Kidney (tissue), 22 donors: ENCODE measurements at regions of chr17 and their contacts with region 1.

Region 1: DNA sequence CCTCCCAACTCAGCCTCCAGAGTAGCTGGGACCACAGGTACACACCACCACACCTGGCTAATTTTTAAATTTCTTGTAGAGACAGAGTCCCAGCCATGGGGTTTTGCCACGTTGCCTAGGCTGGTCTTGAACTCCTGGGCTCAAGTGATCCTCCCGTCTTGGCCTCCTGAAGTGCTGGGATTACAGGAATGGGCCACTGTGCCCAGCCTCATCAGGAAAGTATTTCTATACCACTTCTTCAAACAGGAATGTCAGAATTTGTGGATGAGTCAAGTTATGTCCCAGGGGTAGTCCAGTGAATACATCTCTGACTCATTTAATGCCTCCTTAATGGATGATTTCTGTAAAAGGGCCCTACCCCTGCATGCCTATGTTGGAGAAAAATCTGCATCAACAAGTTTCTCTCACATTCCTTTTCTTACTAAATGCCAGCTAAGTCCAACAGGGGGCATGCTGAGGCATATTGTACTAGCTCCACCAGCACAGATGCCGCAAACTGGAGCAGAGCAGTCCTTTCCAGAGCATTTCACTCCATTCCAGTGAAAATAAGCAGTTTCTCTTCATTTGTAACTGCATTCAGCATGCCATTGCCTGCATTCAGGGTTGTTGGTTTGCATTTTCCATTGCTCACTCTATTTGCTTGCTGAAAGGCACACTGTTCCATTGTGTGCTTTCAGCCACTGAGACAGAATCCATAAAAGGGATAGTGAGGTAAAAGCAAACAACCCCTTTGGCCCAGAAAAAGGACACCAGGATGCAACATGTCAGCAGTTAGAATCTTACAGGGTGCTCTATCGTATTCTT is 5.3 kb upstream of the CAVIN1 start:
- DNase-seq: peak in 4 of 5 donors; percentile 55 to 92 (median 78)
- H3K4me3 ChIP-seq: no peak overlapping the region
- H3K27ac ChIP-seq: peak overlapping the region in 1 of 2 donors; percentile 32
- H3K4me1 ChIP-seq: peaks cover 0 to 3% (median 3%) of the 10 kb centered on the region in 3 donors
- H3K27me3 ChIP-seq: no peaks in the 10 kb centered on the region
- CTCF ChIP-seq: peak; percentile 78

Region 2: DNA sequence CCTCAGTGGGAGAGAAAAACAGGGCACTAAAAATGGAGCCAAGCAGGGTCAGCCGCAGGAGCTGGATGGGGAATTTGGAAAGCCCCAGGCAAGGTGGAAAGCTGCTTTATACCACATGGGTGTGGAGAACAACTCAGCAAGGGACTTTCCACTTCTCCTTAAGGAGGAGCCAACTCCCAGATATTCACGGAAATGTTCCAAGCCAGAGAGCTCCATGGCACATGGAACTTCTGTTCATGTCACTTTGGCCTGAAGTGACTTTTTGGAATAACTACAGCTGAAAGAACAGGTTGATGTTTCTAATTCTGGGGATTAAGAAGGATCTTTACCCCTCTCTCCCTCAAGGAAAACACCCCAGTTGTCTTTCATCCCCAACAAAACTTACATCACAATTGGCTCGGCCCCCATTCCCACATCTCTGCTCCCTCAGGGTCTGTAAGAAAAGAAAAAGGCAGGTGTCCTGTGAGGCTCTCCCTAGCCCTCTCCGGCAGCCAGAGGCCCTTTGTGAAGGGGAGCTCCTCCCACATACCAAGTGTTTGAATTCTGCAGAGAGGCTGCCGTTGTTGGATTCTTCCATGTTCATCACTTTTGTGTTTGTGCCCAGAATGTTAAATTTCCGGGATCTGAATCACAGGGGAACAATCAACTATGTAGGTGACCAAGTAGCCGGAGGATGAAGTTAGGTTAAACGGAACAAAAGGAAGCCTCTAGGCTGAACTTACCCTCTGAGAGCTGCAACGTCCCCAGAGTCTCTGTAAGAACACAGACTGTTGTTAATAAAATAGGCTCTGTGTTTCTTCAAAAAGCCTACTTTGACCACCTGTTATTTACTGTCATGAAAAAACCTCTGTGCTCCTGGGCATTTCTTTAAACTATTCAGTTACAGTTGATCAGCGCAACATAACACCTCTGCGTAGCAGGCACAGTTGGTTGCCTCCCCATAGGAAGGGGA is 99.0 kb before region 1 on chr17:
- intact Hi-C with region 1: no loop called
- DNase-seq: peak in 2 of 5 donors; percentile 50 to 52
- H3K4me3 ChIP-seq: no peak overlapping the region
- H3K27ac ChIP-seq: peak overlapping the region; percentile 18 to 81
- H3K4me1 ChIP-seq: peaks cover 0 to 6% (median 6%) of the 10 kb centered on the region in 3 donors
- H3K27me3 ChIP-seq: no peaks in the 10 kb centered on the region
- CTCF ChIP-seq: no peak

Region 3: DNA sequence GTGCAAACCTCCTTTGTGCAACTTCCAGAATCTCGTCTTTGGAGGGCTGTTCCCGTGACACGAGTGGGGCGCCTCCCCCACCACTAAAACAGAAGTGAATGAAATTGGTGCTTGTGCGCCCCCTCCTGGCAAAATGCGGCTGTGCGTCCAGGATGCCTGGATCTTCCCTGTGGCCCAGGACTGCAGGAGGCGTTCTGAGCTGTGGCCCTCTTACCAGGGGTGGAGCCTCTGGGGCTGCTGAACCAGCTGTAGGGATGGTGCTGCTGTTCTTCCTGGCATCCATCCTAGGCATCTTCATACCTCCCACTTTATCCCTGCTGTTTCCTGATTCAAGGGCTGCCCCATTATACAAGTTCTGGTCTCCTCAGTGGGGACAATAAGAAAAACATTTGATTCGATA is 89.2 kb after region 1 on chr17:
- intact Hi-C with region 1: loop called (anchors 10 kb)
- DNase-seq: peak; percentile 76 to 92 (median 83)
- H3K4me3 ChIP-seq: no peak overlapping the region
- H3K27ac ChIP-seq: peak overlapping the region; percentile 91 to 96
- H3K4me1 ChIP-seq: peaks cover 19 to 69% (median 60%) of the 10 kb centered on the region in 3 donors
- H3K27me3 ChIP-seq: no peaks in the 10 kb centered on the region
- CTCF ChIP-seq: peak; percentile 92